Cardiac septum (tissue), 1 donor: ENCODE measurements at regions of chr1 and their contacts with region 1.

Region 1: DNA sequence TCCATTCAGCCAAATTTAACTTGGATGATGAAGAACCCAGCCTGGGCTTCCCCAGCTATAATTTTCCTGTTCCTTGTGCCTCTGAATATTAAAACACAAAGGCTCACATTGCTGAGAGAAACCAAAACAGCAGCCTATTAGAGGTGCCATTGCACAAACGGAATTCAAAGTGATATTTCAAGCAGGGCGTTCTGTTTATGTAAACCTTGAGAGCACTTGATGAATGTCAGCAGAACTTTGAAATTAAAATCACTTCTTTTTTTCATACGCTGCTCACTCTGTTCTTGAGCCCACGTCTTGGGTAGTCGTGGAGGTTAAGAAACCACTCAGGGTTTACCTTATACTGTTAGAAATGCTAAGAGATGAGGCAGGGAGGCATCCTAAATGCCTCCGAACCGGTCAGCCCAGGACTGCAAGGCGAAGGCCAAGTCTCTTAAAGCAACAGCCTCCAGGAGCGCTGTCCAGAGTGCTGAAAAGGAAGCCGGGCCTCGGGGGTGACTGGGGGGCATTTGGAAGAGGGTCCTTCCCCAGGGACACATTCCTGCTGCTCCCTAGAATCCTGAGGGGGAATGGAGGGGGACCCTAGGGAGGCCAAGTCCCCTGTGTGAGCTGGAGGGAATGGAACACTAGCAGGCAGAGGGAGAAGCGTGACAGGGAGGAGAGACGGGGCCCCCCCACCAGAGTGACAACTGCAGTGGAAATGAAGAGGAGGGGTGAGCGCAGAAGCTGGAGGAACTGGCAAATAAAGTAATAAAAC is 154.8 kb upstream of the VAMP3 start:
- DNase-seq: peak; percentile 86

Region 2: DNA sequence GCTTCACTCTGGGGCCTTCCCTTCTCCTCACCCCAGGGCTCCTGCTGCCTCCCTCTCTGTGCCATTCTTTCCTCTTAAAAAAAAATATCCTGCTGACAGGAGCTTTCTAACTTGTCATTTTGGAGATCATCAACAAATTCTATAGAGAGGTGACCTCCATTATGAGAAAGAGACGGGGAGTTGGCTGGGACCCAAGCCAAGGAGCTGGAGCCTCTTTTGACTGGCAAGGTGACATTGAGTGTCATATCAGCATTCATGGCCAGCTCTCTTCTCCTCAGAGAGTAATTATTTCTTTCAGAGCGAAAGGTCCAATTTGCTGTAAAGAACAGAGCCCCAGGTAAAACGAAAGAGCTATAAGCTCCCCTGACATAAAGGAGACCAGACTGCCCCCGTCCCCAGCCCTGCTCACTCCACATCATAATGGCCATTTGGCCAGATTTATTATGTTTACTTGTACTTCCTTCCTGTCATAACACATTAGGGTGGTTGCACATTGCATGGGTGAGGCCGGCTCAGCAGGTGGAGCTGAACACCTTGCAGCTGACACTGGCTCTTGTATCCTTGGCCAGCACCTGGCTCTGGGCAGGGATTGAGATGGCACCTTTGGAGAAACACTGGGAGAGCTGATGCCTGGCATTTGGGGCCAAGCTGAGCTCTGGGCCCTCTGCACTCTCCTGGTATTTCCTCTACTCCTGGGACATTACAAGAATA is 249.1 kb before region 1 on chr1:
- intact Hi-C with region 1: loop called (anchors 10 kb)
- DNase-seq: no peak

Region 3: DNA sequence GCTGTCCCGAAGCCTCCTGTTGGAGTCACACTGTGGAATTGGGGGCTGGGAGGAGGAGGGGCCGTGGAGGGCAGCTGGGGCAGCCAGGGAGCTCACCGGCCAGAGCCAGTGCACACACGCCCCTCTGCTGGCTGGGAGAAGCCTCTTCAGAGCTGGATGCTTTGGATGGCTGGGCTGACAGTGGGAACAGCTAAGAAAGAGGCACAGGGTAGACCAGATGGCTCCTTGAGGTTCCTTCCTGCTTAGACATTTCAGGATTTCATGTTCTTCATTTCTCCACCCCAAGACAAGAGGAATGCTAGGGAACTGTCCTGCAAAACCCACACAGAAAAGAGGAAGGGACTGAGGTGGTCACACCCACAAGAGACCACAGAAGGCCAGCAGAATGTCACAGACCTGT is 99.9 kb before region 1 on chr1:
- intact Hi-C with region 1: loop called (anchors 2 kb)
- DNase-seq: no peak